ENCODE measurements at regions of chr10 and their contacts with region 1.

Region 1: DNA sequence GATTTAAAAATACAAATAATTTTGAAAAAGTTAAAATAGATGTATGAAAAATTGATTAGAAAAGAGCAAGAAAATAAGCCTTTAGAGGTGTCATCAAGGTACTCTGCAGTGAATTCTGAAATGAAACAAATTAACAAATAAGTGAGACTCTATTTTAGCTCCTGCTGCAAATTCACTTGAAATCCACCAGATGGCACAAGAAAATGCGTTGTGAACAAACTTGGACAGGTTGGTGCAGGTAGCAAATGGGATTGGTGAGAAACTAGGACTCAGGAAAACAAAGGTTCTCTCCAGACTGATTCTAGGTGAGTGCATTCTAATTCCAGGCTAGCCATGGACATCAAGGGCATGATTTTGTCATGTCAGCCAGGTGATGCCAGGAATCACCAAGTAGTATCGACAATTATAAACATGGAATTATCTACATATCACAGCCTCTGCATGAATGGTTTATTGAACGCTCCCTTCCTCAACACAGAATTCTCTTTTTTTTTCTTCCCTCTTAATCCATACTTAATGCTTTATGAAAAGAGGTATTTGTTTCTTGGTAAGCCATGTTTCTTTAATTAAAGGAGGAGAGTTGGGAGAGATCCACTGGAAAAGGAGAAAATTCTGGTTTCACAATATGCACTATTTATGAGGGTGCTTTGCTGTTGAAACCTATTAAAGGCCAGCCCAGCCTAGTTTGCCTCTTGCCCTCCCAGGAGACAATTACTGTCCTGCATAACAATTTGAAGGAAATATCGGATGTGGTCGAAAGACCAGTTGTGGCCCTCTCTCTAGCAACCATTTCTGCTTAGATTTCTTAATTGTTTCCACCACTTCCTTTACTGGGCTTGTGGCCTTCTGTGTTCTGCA is 118.1 kb downstream of the ZNF365 start:
- DNase-seq: peak in 3 of 9 experiments; percentile 5 to 56 (median 31)
- ATAC-seq: peak; percentile 57
- H3K4me3 ChIP-seq: no peak overlapping the region
- H3K4me3 Mint-ChIP-seq: no peak overlapping the region
- H3K27ac ChIP-seq: no peak overlapping the region
- H3K27ac Mint-ChIP-seq: no peak overlapping the region
- H3K4me1 ChIP-seq: no peaks in the 10 kb centered on the region
- H3K4me1 Mint-ChIP-seq: peaks cover 5% of the 10 kb centered on the region
- H3K27me3 ChIP-seq: no peaks in the 10 kb centered on the region
- H3K27me3 Mint-ChIP-seq: peaks cover 5% of the 10 kb centered on the region
- CTCF ChIP-seq: peak; percentile 55

Region 2: GRCh38 chr10:62528441-62528840 is 36.2 kb after region 1 on chr10:
- CTCF ChIA-PET with region 1: interaction called, 4 read pairs
- POLR2A ChIA-PET with region 1: no interaction called
- intact Hi-C with region 1: loop called in 1 of 2 experiments (anchors 5 kb)
- DNase-seq: peak in 2 of 9 experiments; percentile 57 to 75
- ATAC-seq: peak; percentile 88
- H3K4me3 ChIP-seq: peak overlapping the region in 1 of 2 experiments; percentile 14
- H3K4me3 Mint-ChIP-seq: peak overlapping the region; percentile 40
- H3K27ac ChIP-seq: no peak overlapping the region
- H3K27ac Mint-ChIP-seq: peak overlapping the region; percentile 70
- H3K4me1 ChIP-seq: peaks cover 43% of the 10 kb centered on the region
- H3K4me1 Mint-ChIP-seq: peaks cover 44% of the 10 kb centered on the region
- H3K27me3 ChIP-seq: no peaks in the 10 kb centered on the region
- H3K27me3 Mint-ChIP-seq: no peaks in the 10 kb centered on the region
- CTCF ChIP-seq: no peak

Region 3: DNA sequence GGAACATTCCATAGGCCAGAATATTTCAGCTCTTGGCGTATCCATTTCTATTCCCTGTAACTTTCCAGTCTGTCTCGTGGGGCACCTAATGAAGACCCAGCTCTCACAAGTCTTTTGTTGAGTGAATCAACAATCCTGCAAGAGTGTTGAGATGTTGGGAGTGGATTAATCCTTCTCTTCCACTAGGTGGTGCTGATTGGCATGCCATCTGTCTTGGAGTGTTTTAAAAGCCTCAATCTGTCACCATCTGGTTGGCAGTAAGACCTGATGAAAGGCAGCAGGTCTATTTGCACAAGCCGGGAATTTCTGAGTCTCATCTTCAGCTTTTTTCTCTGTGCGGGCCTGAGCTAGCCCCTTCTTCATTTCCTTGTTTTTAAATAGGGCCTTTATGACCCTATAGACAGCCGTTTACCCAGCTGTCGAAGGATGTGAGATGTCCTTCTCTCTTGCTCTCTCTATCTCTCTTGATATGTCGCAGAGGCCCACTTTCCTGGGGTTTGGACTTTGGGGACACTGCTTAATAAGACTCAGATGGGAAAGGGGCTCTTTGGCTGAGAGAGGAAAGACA is 62.5 kb after region 1 on chr10:
- CTCF ChIA-PET with region 1: no interaction called
- POLR2A ChIA-PET with region 1: no interaction called
- intact Hi-C with region 1: loop called in 1 of 2 experiments (anchors 1 kb)
- DNase-seq: peak in 3 of 9 experiments; percentile 19 to 55 (median 34)
- ATAC-seq: no peak
- H3K4me3 ChIP-seq: no peak overlapping the region
- H3K4me3 Mint-ChIP-seq: no peak overlapping the region
- H3K27ac ChIP-seq: no peak overlapping the region
- H3K27ac Mint-ChIP-seq: no peak overlapping the region
- H3K4me1 ChIP-seq: no peaks in the 10 kb centered on the region
- H3K4me1 Mint-ChIP-seq: no peaks in the 10 kb centered on the region
- H3K27me3 ChIP-seq: no peaks in the 10 kb centered on the region
- H3K27me3 Mint-ChIP-seq: peaks cover 15% of the 10 kb centered on the region
- CTCF ChIP-seq: peak; percentile 41

Region 4: GRCh38 chr10:63083904-63084689 is 591.9 kb after region 1 on chr10:
- CTCF ChIA-PET with region 1: interaction called, 24 read pairs
- POLR2A ChIA-PET with region 1: no interaction called
- intact Hi-C with region 1: loop called (anchors 1 kb)
- DNase-seq: peak in 8 of 9 experiments; percentile 7 to 76 (median 40)
- ATAC-seq: peak; percentile 51
- H3K4me3 ChIP-seq: no peak overlapping the region
- H3K4me3 Mint-ChIP-seq: no peak overlapping the region
- H3K27ac ChIP-seq: no peak overlapping the region
- H3K27ac Mint-ChIP-seq: no peak overlapping the region
- H3K4me1 ChIP-seq: no peaks in the 10 kb centered on the region
- H3K4me1 Mint-ChIP-seq: no peaks in the 10 kb centered on the region
- H3K27me3 ChIP-seq: no peaks in the 10 kb centered on the region
- H3K27me3 Mint-ChIP-seq: peaks cover 9% of the 10 kb centered on the region
- CTCF ChIP-seq: peak; percentile 77

Measured in CD8-positive, alpha-beta T cell (primary cell).